Activated T-helper 2 cell treated with anti-CD3 and anti-CD28 coated beads, Interferon-gamma antibody, Interleukin-2, Interleukin-4, amounts not matched to agents 10 μg/mL and 5 μg/mL and 100 μg/mL, durations not matched to agents 14 hours and 24 hours and 36 hours (primary cell): ENCODE measurements at regions of chr10 and their contacts with region 1.

Region 1: GRCh38 chr10:227014-227413 is 91.8 kb downstream of the ZMYND11 start:
- DNase-seq: no peak
- H3K4me3 Mint-ChIP-seq: no peak overlapping the region
- H3K27ac Mint-ChIP-seq: no peak overlapping the region
- H3K4me1 Mint-ChIP-seq: peaks cover 7% of the 10 kb centered on the region
- H3K27me3 Mint-ChIP-seq: no peaks in the 10 kb centered on the region

Region 2: DNA sequence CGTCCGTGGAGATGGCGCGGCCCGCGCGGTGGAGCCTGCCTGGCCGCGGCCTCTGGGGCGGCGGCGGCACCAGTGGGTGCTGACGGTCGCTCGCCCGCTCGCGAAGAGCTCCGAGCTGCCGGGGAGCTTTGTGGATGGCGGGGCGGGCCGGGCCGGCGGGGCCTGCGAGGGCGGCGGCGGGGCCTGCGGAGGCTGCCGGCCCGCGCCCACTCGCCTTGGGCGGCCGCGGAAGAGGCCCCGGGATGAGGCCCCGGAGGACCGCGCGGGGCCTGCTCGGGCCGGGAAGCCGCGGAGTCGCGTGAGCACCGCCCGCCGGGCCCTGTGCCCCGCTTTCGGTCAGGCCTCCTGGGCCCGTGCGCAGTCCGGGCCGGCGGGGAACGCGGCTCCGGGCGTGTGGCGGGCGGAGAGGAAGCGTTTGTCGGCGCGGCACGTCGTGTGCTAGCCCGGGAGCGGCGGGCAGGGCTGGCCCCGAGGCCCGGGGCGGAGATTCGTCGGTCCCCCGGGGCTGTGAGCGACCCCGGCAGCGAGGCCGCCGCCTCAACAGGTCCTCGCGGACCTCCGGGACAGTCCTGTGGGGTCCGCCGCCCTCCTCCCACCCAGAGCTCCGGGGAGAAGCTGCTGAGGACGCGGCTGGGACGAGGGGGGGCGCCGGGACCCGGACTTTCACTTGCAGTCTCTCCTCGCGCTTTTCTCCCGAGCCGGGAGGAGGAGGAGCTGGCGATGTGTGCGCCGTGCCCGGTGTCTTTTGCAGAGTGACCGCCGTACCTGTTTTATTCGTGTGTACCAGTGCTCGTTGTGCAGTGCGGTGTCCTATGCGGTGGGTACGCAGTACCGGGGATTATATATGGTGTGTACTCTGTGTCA is 91.2 kb before region 1 on chr10:
- intact Hi-C with region 1: loop called (anchors 5 kb)
- DNase-seq: peak; percentile 58
- H3K4me3 Mint-ChIP-seq: peak overlapping the region; percentile 90
- H3K27ac Mint-ChIP-seq: peak overlapping the region; percentile 81
- H3K4me1 Mint-ChIP-seq: peaks cover 23% of the 10 kb centered on the region
- H3K27me3 Mint-ChIP-seq: peaks cover 5% of the 10 kb centered on the region